ENCODE measurements at regions of chr5 and their contacts with region 1.

Region 1: GRCh38 chr5:154196955-154197652 is 6.6 kb downstream of the GALNT10 start:
- DNase-seq: no peak
- H3K4me3 ChIP-seq: no peak overlapping the region; the same call in 1 of the 2 replicates
- CTCF ChIP-seq: peak; percentile 25

Region 2: DNA sequence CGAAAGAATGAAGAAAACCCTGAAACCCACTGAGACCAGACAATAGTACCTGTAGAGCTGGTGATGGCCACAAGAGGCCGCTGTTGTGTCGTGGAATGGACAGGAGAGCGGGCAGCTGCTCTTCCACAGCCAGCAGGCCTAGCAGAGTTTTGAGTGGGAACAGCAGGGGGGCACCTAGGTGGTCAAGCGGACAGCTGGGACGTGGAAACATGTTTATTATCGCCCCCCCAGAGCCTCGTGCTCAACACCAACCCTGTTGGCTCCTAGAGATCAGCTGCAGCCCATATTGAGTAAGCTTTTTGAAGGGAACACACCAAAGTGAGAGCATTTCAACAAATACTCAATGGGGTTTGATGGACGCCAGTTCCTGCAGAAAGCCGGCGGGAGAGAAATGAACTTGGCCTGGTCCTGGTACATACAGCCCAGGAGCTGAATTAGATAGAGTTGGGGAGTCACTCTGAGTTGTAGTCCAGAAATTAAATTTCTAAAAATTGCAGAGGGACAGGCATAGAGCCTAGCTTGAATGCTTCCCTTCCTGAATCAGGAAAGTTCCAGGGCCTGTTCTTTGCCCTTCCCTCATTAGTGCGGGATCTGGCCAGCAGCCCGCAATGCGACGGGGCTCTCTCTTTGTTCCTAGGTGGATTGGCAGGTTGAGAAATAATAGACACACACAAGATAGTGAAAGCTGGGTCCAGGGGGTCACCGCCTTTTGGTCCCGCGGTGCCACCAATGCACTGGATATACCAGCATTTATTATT is 124.5 kb before region 1 on chr5:
- CTCF ChIA-PET with region 1: interaction called, 81 read pairs
- POLR2A ChIA-PET with region 1: no interaction called
- DNase-seq: no peak
- H3K4me3 ChIP-seq: no peak overlapping the region
- CTCF ChIP-seq: peak; percentile 92

Region 3: DNA sequence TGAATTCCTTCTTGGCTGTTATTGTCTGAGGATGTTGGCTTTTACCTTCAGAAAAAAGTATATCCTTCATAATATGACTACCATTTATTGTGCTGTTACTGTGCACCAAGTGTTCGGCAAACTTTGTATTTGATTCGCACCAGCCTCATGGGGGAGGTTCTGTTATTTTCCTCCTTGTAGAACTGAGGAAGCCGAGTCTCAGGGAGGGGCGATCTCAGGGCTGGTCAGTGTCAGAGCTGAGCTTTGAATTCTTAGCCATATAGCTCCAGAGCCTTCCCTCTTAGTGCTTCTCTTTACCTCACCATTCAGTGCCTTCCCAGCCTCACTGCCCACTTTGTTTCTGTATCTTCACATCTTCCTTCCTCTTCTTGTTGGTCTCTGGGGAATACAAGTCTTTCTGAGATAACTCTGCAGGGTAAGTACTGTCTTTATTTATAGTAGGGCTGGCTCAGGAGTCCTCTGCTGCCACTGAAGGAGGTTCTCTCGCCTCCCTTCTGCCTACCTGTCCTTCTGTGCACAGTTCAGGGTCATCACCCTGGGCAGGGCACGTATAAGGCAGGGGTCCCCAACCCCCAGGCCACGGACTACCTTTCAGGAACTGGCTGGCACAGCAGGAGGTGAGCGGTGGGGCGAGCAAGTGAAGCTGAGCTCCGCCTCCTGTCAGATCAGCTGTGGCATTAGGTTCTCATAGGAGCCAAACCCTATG is 41.8 kb after region 1 on chr5:
- CTCF ChIA-PET with region 1: interaction called, 11 read pairs
- POLR2A ChIA-PET with region 1: no interaction called
- DNase-seq: no peak
- H3K4me3 ChIP-seq: no peak overlapping the region
- CTCF ChIP-seq: no peak

Region 4: DNA sequence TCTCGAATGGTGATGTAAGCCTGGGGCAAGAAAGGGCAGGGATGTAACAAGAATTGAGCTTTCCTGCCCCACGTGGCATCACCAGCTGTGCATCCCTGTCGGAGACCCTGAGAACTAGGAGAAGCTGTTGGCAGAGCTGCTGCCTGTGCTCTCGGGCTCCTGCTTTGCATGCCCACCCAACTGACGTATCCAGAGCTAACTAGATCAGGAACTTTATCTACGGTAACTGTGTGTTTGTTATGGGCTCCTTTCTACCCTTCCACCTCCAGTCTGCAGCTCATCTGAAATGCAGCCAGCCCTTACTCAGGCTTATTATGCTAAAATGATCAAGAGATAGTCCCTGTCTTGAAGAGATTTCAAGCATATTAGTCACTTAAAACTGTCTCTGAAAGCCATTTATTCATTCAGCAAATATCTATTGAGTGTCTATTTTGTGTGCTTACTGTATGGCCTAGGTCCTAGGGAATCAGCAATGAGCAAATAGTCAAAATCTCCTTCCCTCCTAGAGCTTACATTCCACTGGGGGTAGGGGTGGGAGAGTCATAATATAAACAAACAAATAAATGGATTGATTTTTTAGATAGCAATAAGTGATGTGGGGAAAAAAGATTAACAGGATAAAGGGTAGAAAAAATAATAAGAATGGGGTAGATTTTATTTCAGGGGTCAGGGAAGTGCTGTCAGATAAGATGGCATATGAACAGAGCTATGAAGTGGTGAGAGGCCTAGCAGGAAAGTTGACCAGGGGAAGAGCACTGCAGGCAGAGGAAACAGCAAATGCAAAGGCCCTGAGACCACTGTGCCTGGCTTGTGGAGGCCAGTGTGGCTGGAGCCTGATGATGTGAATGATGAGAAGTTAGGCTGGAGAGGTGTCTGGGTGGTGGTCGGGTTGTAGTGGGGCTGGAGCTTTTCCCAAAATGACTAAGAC is 111.6 kb after region 1 on chr5:
- CTCF ChIA-PET with region 1: interaction called, 11 read pairs
- POLR2A ChIA-PET with region 1: interaction called, 19 read pairs
- DNase-seq: peak; percentile 77
- H3K4me3 ChIP-seq: no peak overlapping the region; the same call in 1 of the 2 replicates
- CTCF ChIP-seq: no peak

Region 5: GRCh38 chr5:154349626-154350264 is 152.6 kb after region 1 on chr5:
- CTCF ChIA-PET with region 1: no interaction called
- POLR2A ChIA-PET with region 1: no interaction called
- DNase-seq: no peak
- H3K4me3 ChIP-seq: no peak overlapping the region
- CTCF ChIP-seq: no peak

Measured in AG04449 (cell line).